Activated naive CD4-positive, alpha-beta T cell treated with anti-CD3 and anti-CD28 coated beads for 36 hours (primary cell): ENCODE measurements at regions of chr15 and their contacts with region 1.

Region 1: DNA sequence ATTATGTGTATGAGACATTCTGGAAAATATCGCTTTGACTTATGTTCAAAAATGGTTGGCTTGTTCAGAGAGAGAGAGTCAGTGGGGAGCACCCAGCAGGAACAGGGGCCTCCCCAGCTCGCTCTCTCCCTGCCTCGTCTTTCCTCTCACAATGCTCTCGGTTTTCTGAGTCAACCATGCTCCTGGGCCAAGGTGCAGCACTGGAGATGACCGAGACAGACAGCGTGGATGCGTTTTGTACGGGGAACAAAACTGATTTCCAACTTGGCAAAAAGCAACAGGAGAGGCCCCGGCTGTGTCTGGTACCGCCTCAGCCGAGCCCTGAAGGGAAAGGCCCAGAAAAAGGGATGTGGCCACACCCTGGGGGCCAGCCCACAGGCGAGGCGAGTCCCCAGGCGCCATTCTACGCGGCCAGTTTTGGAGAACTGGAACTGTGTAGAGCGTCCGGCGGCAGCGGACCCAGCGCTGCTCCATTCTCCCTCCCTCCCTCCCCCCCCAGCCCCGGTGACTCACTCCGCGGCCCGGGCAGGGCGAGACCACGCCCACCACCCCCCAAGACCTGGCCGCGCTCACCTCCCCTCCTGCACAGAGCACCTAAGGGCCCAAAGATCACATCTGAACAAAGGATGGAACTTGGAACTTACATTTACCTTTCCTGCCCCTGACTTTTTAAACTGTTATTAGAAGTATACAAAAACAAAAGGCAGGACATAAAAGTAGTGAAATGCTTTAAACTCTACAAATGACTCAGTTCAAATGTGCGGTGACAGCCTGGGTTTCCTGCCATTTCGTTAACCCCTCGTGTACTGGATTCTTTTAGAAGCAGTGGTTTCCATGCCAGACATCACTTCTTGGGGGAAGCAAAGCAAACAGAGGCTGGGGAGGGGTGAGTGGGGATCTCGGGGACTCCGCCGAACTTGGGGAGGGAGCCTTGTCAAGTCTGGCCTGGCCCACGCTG is 12.7 kb downstream of the ATP10A start:
- DNase-seq: peak; percentile 92
- H3K4me3 Mint-ChIP-seq: peak overlapping the region; percentile 93
- H3K27ac Mint-ChIP-seq: peak overlapping the region; percentile 97
- H3K4me1 Mint-ChIP-seq: peaks cover 86% of the 10 kb centered on the region
- H3K27me3 Mint-ChIP-seq: no peaks in the 10 kb centered on the region

Region 2: DNA sequence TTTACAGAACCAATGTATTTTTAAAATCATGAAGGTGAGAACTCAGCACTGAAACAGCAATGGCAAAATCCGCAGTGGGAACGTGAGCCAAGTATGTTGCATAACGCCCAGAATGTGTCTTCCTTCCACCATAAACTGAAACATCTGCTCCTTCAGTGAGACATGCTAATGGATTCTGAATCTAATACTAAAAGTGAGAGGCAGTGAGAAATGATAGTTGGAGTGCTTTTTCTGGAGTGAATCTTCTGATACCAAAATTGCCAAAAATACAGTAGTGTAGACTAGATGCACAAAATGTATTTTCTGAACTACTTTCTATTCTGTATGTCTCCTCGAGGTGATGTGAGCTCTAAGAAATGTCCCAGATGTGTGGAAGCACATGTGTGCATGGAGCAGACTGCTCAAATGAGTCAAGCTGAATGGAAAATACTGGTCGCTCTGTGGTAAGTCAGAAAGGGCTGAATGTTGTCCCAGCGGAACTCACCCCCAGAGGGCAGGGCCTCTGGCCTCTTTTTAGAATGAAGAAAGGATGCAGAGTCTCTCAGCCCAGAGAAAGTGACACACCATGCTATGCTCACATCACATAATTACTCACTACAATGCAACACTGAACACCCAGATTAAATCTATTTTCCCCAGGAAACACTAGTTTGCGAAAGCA is 60.3 kb before region 1 on chr15:
- CTCF ChIA-PET with region 1: no interaction called
- intact Hi-C with region 1: loop called (anchors 1 kb)
- DNase-seq: peak; percentile 76
- H3K4me3 Mint-ChIP-seq: peak overlapping the region; percentile 20
- H3K27ac Mint-ChIP-seq: peak overlapping the region; percentile 85
- H3K4me1 Mint-ChIP-seq: peaks cover 66% of the 10 kb centered on the region
- H3K27me3 Mint-ChIP-seq: no peaks in the 10 kb centered on the region

Region 3: DNA sequence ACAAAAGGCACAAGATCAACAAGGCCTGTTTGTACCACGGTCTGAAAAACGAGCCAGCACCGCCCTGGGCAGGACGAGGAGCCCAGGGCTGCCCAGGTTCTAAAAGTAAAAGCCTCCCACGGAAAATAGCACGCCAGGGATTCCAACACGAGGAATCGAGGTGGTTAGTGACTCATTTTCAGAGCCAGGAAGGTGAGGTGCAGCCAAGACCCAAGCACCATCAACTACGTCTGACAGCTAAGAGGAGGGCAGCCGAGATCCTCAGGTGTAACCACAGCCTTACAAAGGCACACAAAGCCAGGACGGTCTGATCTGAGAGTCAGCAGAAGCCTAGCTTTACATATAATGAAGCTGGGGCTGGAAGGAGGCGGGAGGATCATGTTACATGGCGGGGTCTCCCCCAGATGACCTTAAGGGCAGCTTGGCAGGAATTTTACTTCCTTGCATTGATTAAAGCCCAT is 39.8 kb before region 1 on chr15:
- CTCF ChIA-PET with region 1: no interaction called
- intact Hi-C with region 1: loop called (anchors 1 kb)
- DNase-seq: peak; percentile 50
- H3K4me3 Mint-ChIP-seq: peak overlapping the region; percentile 9
- H3K27ac Mint-ChIP-seq: peak overlapping the region; percentile 82
- H3K4me1 Mint-ChIP-seq: peaks cover 73% of the 10 kb centered on the region
- H3K27me3 Mint-ChIP-seq: no peaks in the 10 kb centered on the region

Region 4: GRCh38 chr15:25830844-25831451 is 19.5 kb before region 1 on chr15:
- CTCF ChIA-PET with region 1: interaction called, 18 read pairs
- intact Hi-C with region 1: loop called (anchors 1 kb)
- DNase-seq: no peak
- H3K4me3 Mint-ChIP-seq: no peak overlapping the region
- H3K27ac Mint-ChIP-seq: no peak overlapping the region
- H3K4me1 Mint-ChIP-seq: peaks cover 37% of the 10 kb centered on the region
- H3K27me3 Mint-ChIP-seq: no peaks in the 10 kb centered on the region

Region 5: GRCh38 chr15:25838191-25838870 is 12.1 kb before region 1 on chr15:
- CTCF ChIA-PET with region 1: interaction called, 18 read pairs
- intact Hi-C with region 1: loop called (anchors 1 kb)
- DNase-seq: peak; percentile 70
- H3K4me3 Mint-ChIP-seq: no peak overlapping the region
- H3K27ac Mint-ChIP-seq: peak overlapping the region; percentile 11
- H3K4me1 Mint-ChIP-seq: peaks cover 61% of the 10 kb centered on the region
- H3K27me3 Mint-ChIP-seq: no peaks in the 10 kb centered on the region

Region 6: GRCh38 chr15:25905140-25905539 is 54.7 kb after region 1 on chr15:
- CTCF ChIA-PET with region 1: no interaction called
- intact Hi-C with region 1: no loop called
- DNase-seq: peak; percentile 56
- H3K4me3 Mint-ChIP-seq: no peak overlapping the region
- H3K27ac Mint-ChIP-seq: peak overlapping the region; percentile 22
- H3K4me1 Mint-ChIP-seq: peaks cover 16% of the 10 kb centered on the region
- H3K27me3 Mint-ChIP-seq: no peaks in the 10 kb centered on the region

Region 7: DNA sequence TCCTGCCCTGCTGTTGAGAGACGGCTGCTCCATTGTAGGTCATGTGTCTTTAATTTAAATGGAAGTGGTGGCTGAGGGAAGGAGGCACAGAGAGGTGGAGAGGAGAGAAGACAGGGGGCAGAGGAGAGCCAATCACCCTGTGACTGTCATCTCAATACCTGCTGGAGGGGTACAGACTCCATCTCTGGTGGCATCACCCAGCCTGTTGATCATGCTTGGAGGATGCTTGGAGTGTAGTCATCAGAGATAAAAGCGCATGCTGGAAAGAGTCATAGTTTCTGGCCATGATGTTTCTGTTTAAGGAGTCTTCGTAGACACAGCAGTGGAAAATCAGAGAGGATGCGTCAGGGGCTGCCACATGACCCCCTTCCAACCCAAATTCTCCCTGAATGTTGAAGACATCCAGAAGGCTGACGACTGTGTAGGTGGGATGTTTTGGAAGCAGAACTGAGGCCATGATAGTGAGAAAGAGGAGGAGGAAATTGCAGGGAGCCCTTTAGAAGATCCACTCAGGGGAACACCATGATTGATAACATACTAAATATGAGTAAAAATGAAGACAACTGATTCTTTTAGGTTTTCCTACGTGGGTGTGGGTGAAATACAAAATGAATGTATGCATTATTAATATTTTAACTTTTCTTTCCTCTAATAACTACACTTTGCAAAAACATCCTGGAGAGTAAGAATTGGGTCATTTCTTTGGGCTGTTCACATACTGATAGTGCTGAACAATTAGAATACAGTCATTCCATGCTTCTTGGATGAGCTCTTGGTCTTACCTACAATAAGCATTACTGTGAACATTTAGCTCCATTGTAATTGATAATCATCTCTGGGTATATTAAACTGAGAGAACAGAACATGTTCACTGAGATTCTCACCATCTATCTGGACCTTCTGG is 223.2 kb after region 1 on chr15:
- CTCF ChIA-PET with region 1: no interaction called
- intact Hi-C with region 1: loop called (anchors 1 kb)
- DNase-seq: peak; percentile 66
- H3K4me3 Mint-ChIP-seq: no peak overlapping the region
- H3K27ac Mint-ChIP-seq: peak overlapping the region; percentile 86
- H3K4me1 Mint-ChIP-seq: peaks cover 23% of the 10 kb centered on the region
- H3K27me3 Mint-ChIP-seq: peaks cover 14% of the 10 kb centered on the region

Region 8: DNA sequence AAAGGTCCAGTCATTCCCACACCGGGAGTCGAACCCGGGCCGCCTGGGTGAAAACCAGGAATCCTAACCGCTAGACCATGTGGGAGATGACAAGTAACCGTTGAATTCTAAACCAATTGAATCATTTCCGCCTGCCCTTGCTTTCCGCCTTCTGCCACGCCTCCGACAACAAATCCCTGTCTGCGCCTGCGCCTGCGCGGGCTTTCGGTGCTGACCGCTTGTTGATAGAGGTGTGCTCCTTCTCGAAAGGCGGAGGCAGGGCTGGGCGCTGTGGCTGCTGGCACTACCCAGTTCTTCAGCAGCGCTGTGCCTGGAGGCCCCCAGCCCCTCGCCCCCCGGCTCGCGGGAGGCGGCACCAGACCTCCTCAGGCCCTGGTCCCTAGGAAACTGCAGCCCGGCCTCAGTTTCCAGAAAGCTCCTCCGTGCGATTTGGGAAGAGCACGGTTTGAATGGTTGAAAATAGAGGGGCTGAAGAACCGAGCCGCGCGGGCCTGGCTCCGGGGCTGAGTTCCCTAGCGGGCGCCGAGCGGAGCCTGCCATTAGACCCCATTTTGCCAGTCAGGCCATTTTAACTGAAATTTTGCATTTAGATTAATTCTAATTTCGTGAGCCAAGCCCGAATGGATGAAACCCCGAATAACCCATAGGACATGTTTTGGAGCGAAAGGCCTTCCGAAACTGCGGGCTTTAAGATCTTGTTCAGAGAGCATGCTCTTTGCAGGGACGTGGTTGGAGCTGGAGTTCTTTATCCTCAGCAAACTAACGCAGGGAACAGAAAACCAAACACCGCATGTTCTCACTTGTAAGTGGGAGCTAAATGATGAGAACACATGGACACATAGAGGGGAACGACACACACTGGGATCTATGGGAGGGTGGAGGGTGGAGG is 232.0 kb after region 1 on chr15:
- CTCF ChIA-PET with region 1: no interaction called
- intact Hi-C with region 1: loop called (anchors 1 kb)
- DNase-seq: peak; percentile 96
- H3K4me3 Mint-ChIP-seq: peak overlapping the region; percentile 83
- H3K27ac Mint-ChIP-seq: peak overlapping the region; percentile 92
- H3K4me1 Mint-ChIP-seq: peaks cover 29% of the 10 kb centered on the region
- H3K27me3 Mint-ChIP-seq: peaks cover 2% of the 10 kb centered on the region

Region 9: DNA sequence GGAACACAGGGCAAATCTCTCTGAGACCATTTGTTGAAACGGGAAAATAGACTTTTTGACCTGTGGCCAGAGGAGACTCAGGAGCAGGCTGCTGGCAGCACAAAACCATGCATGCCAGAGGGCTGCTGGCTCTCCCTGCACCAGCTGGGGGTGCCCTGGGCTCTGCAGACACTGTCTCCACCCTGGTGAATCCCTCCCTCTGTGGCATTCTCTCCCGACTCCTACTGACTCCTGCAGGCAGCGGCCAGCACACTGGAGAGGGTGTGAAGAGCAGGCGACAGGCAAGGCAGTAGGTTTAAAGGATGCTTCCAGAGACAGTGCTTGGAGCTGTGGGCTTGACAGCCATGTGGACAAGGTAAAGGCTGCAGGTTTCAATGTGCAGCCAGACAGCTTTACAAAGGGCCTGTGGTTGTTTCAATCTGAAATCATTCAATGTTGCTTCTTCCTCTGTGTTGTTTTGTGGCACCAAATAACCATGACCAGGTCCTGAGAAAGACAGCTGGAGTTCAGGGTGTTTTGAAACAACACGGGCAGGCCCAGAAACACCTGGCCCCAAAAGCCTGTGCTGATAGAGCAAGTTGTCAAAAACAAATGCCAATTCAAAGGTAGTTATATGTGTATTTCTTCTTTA is 443.7 kb after region 1 on chr15:
- CTCF ChIA-PET with region 1: no interaction called
- intact Hi-C with region 1: no loop called
- DNase-seq: no peak
- H3K4me3 Mint-ChIP-seq: no peak overlapping the region
- H3K27ac Mint-ChIP-seq: no peak overlapping the region
- H3K4me1 Mint-ChIP-seq: no peaks in the 10 kb centered on the region
- H3K27me3 Mint-ChIP-seq: peaks cover 8% of the 10 kb centered on the region